ENCODE measurements at regions of chr11 and their contacts with region 1.

Region 1: GRCh38 chr11:66222358-66223149 is 45.9 kb upstream of the RAB1B start:
- DNase-seq: peak; percentile 96
- ATAC-seq: peak; percentile 97
- H3K4me3 ChIP-seq: no peak overlapping the region; the same call in 1 of the 2 replicates
- H3K27ac ChIP-seq: peak overlapping the region; percentile 92
- H3K4me1 ChIP-seq: peaks cover 17% of the 10 kb centered on the region
- H3K27me3 ChIP-seq: no peaks in the 10 kb centered on the region
- CTCF ChIP-seq: peak; percentile 100; a peak in 5 of 6 replicates
- EP300 ChIP-seq: peak; percentile 70 to 85; a peak in 3 of 4 replicates
- POLR2A ChIP-seq: peak; percentile 62
- RAD21 ChIP-seq: peak; percentile 90

Region 2: DNA sequence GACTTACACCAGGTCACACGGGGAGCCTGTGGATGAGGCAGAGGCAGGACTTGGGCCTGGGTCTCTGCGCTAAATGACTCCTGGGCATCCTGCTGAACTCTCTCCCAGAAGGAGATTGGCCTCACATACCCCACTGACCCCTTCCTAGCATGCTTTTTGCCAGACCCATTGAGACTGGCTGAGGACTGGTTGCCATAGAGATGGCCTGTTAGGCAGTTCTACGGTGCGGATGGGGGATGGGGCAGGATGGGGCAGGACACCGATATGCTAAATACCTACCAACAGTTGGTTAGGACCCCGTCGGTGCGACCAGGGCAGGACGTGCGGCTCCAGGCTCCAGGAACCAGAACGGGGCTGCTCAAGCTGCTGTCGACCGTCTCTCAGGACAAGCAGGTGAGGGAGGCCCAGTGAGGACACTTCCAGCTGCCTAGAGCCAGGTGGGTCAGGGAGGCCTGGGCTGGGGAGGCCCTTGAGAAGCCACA is 277.1 kb before region 1 on chr11 and contains the start of gene TSGA10IP:
- CTCF ChIA-PET with region 1: no interaction called
- POLR2A ChIA-PET with region 1: no interaction called
- RAD21 ChIA-PET with region 1: no interaction called
- SMC1A ChIA-PET with region 1: no interaction called
- in situ Hi-C with region 1: no loop called
- intact Hi-C with region 1: no loop called
- DNase-seq: no peak
- ATAC-seq: no peak
- H3K4me3 ChIP-seq: no peak within 1 kb of the TSS
- H3K27ac ChIP-seq: no peak within 1 kb of the TSS
- H3K4me1 ChIP-seq: peaks cover 8% of the 10 kb centered on the region
- H3K27me3 ChIP-seq: no peaks in the 10 kb centered on the region
- CTCF ChIP-seq: no peak
- EP300 ChIP-seq: no peak
- POLR2A ChIP-seq: no peak
- RAD21 ChIP-seq: no peak
- polyA plus RNA-seq, gene TSGA10IP: not detected

Region 3: GRCh38 chr11:66045177-66045639 is 177.3 kb before region 1 on chr11:
- CTCF ChIA-PET with region 1: interaction called, 17 read pairs
- POLR2A ChIA-PET with region 1: no interaction called
- RAD21 ChIA-PET with region 1: no interaction called
- SMC1A ChIA-PET with region 1: no interaction called
- in situ Hi-C with region 1: no loop called
- intact Hi-C with region 1: no loop called
- DNase-seq: no peak
- ATAC-seq: peak; percentile 98
- H3K4me3 ChIP-seq: no peak overlapping the region
- H3K27ac ChIP-seq: no peak overlapping the region
- H3K4me1 ChIP-seq: peaks cover 2% of the 10 kb centered on the region; the same call in 1 of the 2 replicates
- H3K27me3 ChIP-seq: no peaks in the 10 kb centered on the region
- CTCF ChIP-seq: peak; percentile 86 to 94 (median 89)
- EP300 ChIP-seq: no peak
- POLR2A ChIP-seq: no peak
- RAD21 ChIP-seq: peak; percentile 45

Region 4: DNA sequence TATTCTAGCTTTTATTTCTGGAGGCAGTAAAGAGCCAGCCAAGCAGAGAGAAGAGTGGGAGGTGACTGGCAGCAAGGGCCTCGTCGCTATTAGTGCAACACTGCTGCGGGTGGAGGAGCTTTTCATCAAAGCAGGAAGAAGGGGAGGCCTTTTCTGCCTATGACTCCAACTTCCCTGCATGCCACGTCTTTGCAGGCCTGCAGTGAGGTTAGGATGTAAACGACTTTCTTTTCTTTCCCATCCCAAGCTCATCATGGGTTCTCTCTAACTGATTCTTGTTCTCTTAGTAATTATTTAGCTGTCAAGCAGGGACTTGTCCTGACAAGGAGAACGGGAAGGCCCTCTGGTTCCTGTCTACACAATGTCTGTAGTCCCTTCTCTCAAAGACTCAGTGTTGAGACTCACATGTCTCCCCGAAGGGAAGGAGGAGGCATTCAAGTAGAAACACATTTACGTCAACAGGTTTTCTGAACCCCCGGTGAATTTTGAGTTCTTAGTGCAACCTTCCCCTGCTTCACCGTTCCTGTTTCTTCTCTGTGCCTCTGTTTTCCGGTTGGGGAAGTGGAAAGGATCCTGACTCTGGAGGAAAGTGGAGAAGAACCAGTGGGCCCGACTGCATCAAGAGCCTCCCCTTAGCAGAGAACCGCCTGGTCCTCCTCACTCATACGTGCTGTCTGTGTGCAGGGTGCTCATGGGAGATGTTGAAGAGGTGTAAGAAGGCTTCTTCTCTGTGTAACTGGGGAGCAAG is 95.6 kb before region 1 on chr11:
- CTCF ChIA-PET with region 1: interaction called, 6 read pairs
- POLR2A ChIA-PET with region 1: interaction called, 3 read pairs
- RAD21 ChIA-PET with region 1: interaction called, 10 read pairs
- SMC1A ChIA-PET with region 1: interaction called, 3 read pairs
- in situ Hi-C with region 1: no loop called
- intact Hi-C with region 1: no loop called
- DNase-seq: no peak
- ATAC-seq: peak; percentile 87
- H3K4me3 ChIP-seq: peak overlapping the region; percentile 60
- H3K27ac ChIP-seq: peak overlapping the region; percentile 91
- H3K4me1 ChIP-seq: peaks cover 52% of the 10 kb centered on the region
- H3K27me3 ChIP-seq: no peaks in the 10 kb centered on the region
- CTCF ChIP-seq: 0 out of 6 replicates have a peak, but pooled peaks of 1 of the 3 experiments have one; percentile 9
- EP300 ChIP-seq: no peak
- POLR2A ChIP-seq: peak; percentile 64
- RAD21 ChIP-seq: no peak

Region 5: DNA sequence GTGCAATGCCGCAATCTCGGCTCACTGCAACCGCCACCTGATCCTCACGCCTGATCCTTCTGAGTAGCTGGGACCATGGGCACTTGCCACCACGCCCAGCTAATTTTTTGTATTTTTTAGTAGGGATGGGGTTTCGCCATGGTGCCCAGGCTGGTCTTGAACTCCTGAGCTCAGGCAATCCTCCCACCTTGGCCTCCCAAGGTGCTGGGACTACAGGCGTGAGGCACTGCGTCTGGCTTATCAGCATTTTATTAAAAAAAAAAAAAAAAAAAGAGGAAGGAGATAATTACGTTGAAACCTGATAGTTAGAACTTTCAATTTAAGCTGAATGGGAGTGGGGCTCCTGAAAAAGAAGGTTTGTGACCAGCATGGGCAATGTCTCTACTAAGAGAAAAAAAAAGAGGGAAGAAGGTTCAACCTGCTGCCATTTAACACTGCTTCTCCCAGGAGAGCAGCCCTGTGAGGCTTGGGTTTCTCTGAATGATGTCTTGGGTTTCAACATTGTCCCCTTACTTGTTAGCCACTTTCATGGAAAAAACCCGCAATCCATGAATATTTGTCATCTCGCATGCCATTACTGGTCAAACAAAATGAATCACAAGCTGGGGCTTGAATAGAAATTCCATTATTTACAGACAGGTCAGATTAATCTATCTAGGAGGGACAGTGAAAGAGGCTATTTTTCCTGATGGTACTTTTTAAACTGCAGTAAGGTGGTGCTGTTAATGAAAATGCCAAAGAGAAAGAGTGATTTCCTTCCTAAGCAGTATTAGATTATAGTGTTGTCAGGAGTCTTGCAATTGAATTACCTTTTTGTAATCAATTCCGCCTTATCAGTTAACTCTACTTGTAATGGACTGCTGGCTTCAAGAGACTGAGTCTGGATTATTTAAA is 79.9 kb before region 1 on chr11:
- CTCF ChIA-PET with region 1: interaction called, 46 read pairs
- POLR2A ChIA-PET with region 1: interaction called, 16 read pairs
- RAD21 ChIA-PET with region 1: interaction called, 10 read pairs
- SMC1A ChIA-PET with region 1: interaction called, 9 read pairs
- in situ Hi-C with region 1: no loop called
- intact Hi-C with region 1: loop called (anchors 1 kb)
- DNase-seq: no peak
- ATAC-seq: no peak
- H3K4me3 ChIP-seq: no peak overlapping the region
- H3K27ac ChIP-seq: no peak overlapping the region
- H3K4me1 ChIP-seq: peaks cover 42% of the 10 kb centered on the region
- H3K27me3 ChIP-seq: no peaks in the 10 kb centered on the region
- CTCF ChIP-seq: no peak
- EP300 ChIP-seq: no peak
- POLR2A ChIP-seq: no peak
- RAD21 ChIP-seq: no peak

Region 6: GRCh38 chr11:66258473-66258893 is 35.9 kb after region 1 on chr11:
- CTCF ChIA-PET with region 1: interaction called, 11 read pairs
- POLR2A ChIA-PET with region 1: interaction called, 4 read pairs
- RAD21 ChIA-PET with region 1: no interaction called
- SMC1A ChIA-PET with region 1: interaction called, 5 read pairs
- in situ Hi-C with region 1: no loop called
- intact Hi-C with region 1: no loop called
- DNase-seq: no peak
- ATAC-seq: no peak; the same call in 1 of the 3 replicates
- H3K4me3 ChIP-seq: peak overlapping the region; percentile 81
- H3K27ac ChIP-seq: peak overlapping the region; percentile 95
- H3K4me1 ChIP-seq: peaks cover 7% of the 10 kb centered on the region
- H3K27me3 ChIP-seq: no peaks in the 10 kb centered on the region
- CTCF ChIP-seq: no peak
- EP300 ChIP-seq: no peak
- POLR2A ChIP-seq: peak; percentile 51; the same call in 1 of the 2 replicates
- RAD21 ChIP-seq: no peak

Region 7: DNA sequence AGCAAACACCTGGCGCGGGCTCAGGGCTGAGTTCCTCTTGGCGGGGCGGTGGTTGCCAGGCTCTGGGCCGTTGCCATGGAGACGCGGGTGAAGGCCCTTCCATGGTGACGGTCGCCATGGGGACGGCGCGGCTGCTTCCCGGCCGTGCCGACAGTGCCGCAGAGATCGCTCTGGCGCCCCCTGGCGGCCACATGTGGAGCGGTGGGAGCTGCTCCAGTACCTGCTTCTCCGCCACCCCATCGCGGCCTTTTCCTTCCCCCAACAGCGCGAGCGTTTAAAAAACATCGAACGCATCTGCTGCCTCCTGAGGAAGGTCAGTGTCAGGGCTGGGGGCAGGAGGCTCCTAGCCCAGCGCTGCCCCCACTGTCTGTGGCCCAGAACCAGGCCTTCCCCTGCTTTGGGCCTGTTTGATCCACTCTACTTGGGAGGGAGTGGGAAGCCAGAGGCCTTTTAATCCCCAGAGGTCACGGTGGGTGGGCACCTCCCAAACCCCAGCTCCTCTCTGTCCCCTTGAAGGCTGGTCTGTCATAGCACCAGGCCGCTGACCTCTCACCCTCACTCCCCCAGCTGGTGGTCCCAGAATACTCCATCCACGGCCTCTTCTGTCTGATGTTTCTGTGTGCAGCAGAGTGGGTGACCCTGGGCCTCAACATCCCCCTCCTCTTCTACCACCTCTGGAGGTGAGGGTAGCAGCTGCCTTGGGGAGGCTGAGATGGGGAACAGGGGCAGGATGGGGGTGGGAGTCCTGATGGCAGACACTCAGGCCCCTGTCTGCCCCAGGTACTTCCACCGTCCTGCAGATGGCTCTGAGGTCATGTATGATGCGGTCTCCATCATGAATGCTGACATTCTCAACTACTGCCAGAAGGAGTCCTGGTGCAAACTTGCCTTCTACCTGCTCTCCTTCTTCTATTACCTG is 60.2 kb after region 1 on chr11:
- CTCF ChIA-PET with region 1: interaction called, 29 read pairs
- POLR2A ChIA-PET with region 1: no interaction called
- RAD21 ChIA-PET with region 1: interaction called, 11 read pairs
- SMC1A ChIA-PET with region 1: interaction called, 8 read pairs
- in situ Hi-C with region 1: no loop called
- intact Hi-C with region 1: loop called (anchors 1 kb)
- DNase-seq: peak; percentile 65
- ATAC-seq: peak; percentile 95
- H3K4me3 ChIP-seq: no peak overlapping the region
- H3K27ac ChIP-seq: 0 out of 2 replicates have a peak overlapping the region, but pooled peaks have one; percentile 10
- H3K4me1 ChIP-seq: peaks cover 10% of the 10 kb centered on the region
- H3K27me3 ChIP-seq: no peaks in the 10 kb centered on the region
- CTCF ChIP-seq: peak; percentile 90 to 99 (median 97); a peak in 5 of 6 replicates
- EP300 ChIP-seq: peak; percentile 33 to 45; a peak in 1 of 4 replicates
- POLR2A ChIP-seq: peak; percentile 56
- RAD21 ChIP-seq: peak; percentile 42; the same call in 1 of the 2 replicates

Region 8: DNA sequence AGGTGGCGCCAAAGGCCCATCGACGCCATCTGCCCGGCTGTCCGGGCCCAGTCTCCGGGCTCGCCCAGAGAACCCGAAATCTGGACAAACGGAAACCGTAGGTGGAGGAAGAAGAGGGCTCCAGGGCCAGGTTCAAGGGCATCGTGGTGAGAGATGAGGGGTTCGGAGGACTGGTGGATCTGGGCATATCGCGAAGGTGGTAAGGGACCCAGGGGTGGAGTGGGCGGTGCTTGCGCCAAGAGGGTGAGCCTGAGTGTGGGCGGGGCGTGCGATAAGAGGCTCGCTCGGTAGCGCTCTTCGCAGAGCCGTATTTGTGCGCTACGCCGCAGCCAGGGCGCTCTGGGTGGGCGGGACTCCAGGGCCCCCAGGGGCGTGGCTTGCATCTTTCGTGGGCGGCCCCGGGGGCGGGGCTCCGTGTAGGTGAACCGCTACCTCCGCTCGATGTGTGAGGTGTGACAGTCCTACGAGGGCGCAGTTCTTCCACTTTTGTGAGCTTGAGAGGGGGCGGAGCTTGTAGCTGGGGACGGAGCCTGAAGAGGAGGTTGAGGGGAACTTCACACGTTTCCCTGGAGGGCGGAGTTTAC is 89.5 kb after region 1 on chr11:
- CTCF ChIA-PET with region 1: interaction called, 4 read pairs
- POLR2A ChIA-PET with region 1: no interaction called
- RAD21 ChIA-PET with region 1: interaction called, 13 read pairs
- SMC1A ChIA-PET with region 1: interaction called, 4 read pairs
- in situ Hi-C with region 1: no loop called
- intact Hi-C with region 1: no loop called
- DNase-seq: peak; percentile 78
- ATAC-seq: peak; percentile 93
- H3K4me3 ChIP-seq: peak overlapping the region; percentile 66
- H3K27ac ChIP-seq: peak overlapping the region; percentile 55; the same call in 1 of the 2 replicates
- H3K4me1 ChIP-seq: no peaks in the 10 kb centered on the region; the same call in 1 of the 2 replicates
- H3K27me3 ChIP-seq: no peaks in the 10 kb centered on the region; a peak in 1 of 4 replicates
- CTCF ChIP-seq: peak in 2 of 3 experiments; percentile 91 to 94; a peak in 4 of 6 replicates
- EP300 ChIP-seq: no peak
- POLR2A ChIP-seq: peak; percentile 56; the same call in 1 of the 2 replicates
- RAD21 ChIP-seq: peak; percentile 94

Region 9: DNA sequence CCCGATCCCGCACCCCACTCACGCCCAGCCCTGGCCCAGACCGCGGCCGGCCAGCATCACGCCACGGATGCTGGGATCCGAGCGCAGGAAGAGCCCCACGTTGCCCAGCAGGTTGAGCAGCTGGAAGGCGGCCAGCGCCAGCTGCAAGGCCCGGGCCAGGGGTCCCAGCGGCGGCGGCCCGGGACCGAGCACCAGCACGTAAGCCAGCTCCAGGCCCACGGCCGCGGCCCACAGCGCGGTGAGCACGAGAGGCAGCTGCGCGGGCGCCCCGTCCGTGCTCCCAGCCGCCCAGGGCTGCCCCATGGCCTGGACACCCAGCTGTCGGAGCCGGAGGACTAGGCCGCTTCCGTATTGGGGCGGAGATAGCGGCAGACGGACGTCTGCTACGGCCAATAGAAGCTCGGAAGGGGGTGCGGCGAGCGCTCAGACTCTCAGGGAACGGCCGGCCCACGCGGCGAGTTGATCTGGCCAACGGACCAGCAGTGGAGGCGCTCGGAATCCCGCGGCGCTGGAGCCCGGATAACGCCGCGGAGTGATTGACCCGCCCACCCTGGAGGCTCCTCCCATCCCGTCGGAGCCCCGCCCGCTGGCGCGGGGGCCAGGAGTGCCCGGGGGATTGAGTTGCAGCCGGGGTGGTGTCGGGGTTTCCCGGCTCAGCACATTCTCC is 323.3 kb after region 1 on chr11 and contains the start of gene ZDHHC24:
- CTCF ChIA-PET with region 1: no interaction called
- POLR2A ChIA-PET with region 1: no interaction called
- RAD21 ChIA-PET with region 1: no interaction called
- SMC1A ChIA-PET with region 1: no interaction called
- in situ Hi-C with region 1: no loop called
- intact Hi-C with region 1: no loop called
- DNase-seq: peak; percentile 81
- ATAC-seq: peak; percentile 91
- H3K4me3 ChIP-seq: peak within 1 kb of the TSS; percentile 86
- H3K27ac ChIP-seq: peak within 1 kb of the TSS; percentile 72
- H3K4me1 ChIP-seq: peaks cover 10% of the 10 kb centered on the region
- H3K27me3 ChIP-seq: no peaks in the 10 kb centered on the region
- CTCF ChIP-seq: no peak
- EP300 ChIP-seq: no peak
- POLR2A ChIP-seq: peak; percentile 94
- RAD21 ChIP-seq: no peak
- polyA plus RNA-seq, gene ZDHHC24: 0.86 to 0.89 TPM

Measured in GM12878 (cell line).